ENCODE measurements at regions of chr16 and their contacts with region 1.

Region 1: DNA sequence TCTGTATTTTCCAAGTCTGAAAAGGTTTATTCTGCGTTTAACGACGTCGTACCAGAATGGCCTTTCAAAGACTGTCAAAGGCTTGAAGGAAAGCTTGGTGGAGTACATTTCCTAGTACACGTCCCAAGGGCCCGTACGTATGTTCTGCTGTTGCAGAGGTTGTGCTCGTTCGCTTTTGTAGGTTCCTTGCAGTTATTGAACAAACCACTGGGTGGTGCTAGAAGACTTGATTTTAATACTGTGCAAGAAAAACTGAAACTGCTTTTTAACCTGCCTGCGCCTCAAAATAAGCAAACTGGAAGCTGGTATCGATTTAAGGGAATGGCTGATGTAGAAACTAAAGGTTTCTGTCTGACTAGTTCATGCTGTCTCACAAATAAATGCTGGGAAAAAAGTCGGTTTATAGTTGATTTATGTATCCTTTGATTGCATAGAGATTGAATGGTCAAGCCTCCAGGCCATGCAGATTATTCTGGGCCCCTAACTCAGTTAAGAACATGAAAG is 54.6 kb downstream of the USP10 start:
- DNase-seq: peak; percentile 12 to 89 (median 59)
- ATAC-seq: peak; percentile 41 to 81 (median 74)
- H3K4me3 ChIP-seq: no peak overlapping the region
- H3K4me3 Mint-ChIP-seq: peak overlapping the region; percentile 36 to 74 (median 65)
- H3K27ac ChIP-seq: no peak overlapping the region
- H3K27ac Mint-ChIP-seq: peak overlapping the region; percentile 68 to 90
- H3K4me1 ChIP-seq: peaks cover 23 to 35% of the 10 kb centered on the region in 2 experiments
- H3K4me1 Mint-ChIP-seq: peaks cover 79 to 89% (median 86%) of the 10 kb centered on the region in 3 donors
- H3K27me3 ChIP-seq: no peaks in the 10 kb centered on the region
- H3K27me3 Mint-ChIP-seq: no peaks in the 10 kb centered on the region

Region 2: GRCh38 chr16:84687715-84688114 is 66.7 kb before region 1 on chr16:
- CTCF ChIA-PET with region 1: no interaction called
- POLR2A ChIA-PET with region 1: no interaction called
- DNase-seq: no peak
- ATAC-seq: no peak
- H3K4me3 ChIP-seq: no peak overlapping the region
- H3K4me3 Mint-ChIP-seq: no peak overlapping the region
- H3K27ac ChIP-seq: no peak overlapping the region
- H3K27ac Mint-ChIP-seq: no peak overlapping the region
- H3K4me1 ChIP-seq: no peaks in the 10 kb centered on the region
- H3K4me1 Mint-ChIP-seq: peaks cover 0 to 1% (median 0%) of the 10 kb centered on the region in 3 donors
- H3K27me3 ChIP-seq: peaks cover 0 to 9% of the 10 kb centered on the region in 2 experiments
- H3K27me3 Mint-ChIP-seq: peaks cover 10 to 15% of the 10 kb centered on the region in 2 donors

Region 3: DNA sequence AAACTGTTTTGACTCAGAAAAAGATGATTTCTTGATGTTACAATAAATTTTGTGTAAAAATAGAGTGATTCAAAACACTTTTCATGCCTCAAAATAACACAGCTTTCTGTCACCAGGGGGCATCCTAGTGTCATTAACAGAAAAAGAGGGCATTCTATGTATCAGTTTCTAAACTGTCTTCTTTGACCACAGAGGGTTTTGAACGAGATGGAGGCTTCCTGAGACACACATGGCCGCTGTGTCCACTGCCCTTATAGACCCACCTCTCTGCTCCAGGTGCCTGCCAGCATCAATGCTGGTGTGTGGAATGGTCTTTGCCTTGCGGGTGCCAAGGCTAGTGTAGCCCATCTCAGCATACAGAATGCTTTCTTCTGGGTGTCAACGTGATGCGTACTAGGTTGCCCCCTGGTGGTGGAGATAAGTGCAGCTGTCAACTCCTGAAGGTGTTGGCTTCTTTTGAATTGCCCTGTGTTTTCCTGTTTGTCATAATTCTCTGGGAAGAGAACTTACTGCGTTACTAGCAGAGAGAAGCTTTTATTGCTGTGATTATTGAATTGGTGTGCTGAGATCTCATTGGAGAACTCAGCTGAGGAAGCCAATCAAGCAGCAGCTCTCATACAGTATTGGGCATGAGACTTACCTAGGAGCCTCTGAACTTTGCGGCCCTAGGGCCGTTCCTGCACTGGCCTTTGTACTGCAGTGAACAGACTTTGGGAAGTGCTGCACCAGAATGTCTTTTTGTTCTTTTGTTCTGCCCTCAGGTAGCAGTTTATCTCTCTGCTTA is 16.0 kb before region 1 on chr16:
- CTCF ChIA-PET with region 1: interaction called, 5 to 35 read pairs
- POLR2A ChIA-PET with region 1: interaction called in 1 of 2 experiments, 10 read pairs
- DNase-seq: peak; percentile 41 to 90 (median 67)
- ATAC-seq: peak; percentile 70 to 78 (median 72)
- H3K4me3 ChIP-seq: no peak overlapping the region
- H3K4me3 Mint-ChIP-seq: peak overlapping the region in 1 of 3 donors; percentile 18
- H3K27ac ChIP-seq: no peak overlapping the region
- H3K27ac Mint-ChIP-seq: peak overlapping the region in 1 of 2 donors; percentile 69
- H3K4me1 ChIP-seq: peaks cover 6 to 31% of the 10 kb centered on the region in 2 experiments
- H3K4me1 Mint-ChIP-seq: peaks cover 43 to 57% (median 52%) of the 10 kb centered on the region in 3 donors
- H3K27me3 ChIP-seq: no peaks in the 10 kb centered on the region
- H3K27me3 Mint-ChIP-seq: no peaks in the 10 kb centered on the region

Region 4: GRCh38 chr16:84768061-84768807 is 13.8 kb after region 1 on chr16:
- CTCF ChIA-PET with region 1: interaction called, 4 to 10 read pairs
- POLR2A ChIA-PET with region 1: interaction called in 1 of 2 experiments, 3 read pairs
- DNase-seq: peak in 1 of 35 experiments; percentile 35
- ATAC-seq: peak; percentile 36 to 69 (median 48)
- H3K4me3 ChIP-seq: peak overlapping the region in 1 of 2 donors; percentile 16
- H3K4me3 Mint-ChIP-seq: peak overlapping the region; percentile 62 to 72 (median 66)
- H3K27ac ChIP-seq: no peak overlapping the region
- H3K27ac Mint-ChIP-seq: peak overlapping the region; percentile 87 to 92
- H3K4me1 ChIP-seq: peaks cover 18 to 30% of the 10 kb centered on the region in 2 experiments
- H3K4me1 Mint-ChIP-seq: peaks cover 33 to 63% (median 58%) of the 10 kb centered on the region in 3 donors
- H3K27me3 ChIP-seq: no peaks in the 10 kb centered on the region
- H3K27me3 Mint-ChIP-seq: no peaks in the 10 kb centered on the region

Region 5: GRCh38 chr16:84800158-84800978 is 46.0 kb after region 1 on chr16:
- CTCF ChIA-PET with region 1: no interaction called
- POLR2A ChIA-PET with region 1: no interaction called
- DNase-seq: no peak
- ATAC-seq: no peak
- H3K4me3 ChIP-seq: no peak overlapping the region
- H3K4me3 Mint-ChIP-seq: no peak overlapping the region
- H3K27ac ChIP-seq: no peak overlapping the region
- H3K27ac Mint-ChIP-seq: no peak overlapping the region
- H3K4me1 ChIP-seq: no peaks in the 10 kb centered on the region
- H3K4me1 Mint-ChIP-seq: no peaks in the 10 kb centered on the region
- H3K27me3 ChIP-seq: peaks cover 0 to 14% of the 10 kb centered on the region in 2 experiments
- H3K27me3 Mint-ChIP-seq: peaks cover 0 to 2% of the 10 kb centered on the region in 2 donors

Region 6: DNA sequence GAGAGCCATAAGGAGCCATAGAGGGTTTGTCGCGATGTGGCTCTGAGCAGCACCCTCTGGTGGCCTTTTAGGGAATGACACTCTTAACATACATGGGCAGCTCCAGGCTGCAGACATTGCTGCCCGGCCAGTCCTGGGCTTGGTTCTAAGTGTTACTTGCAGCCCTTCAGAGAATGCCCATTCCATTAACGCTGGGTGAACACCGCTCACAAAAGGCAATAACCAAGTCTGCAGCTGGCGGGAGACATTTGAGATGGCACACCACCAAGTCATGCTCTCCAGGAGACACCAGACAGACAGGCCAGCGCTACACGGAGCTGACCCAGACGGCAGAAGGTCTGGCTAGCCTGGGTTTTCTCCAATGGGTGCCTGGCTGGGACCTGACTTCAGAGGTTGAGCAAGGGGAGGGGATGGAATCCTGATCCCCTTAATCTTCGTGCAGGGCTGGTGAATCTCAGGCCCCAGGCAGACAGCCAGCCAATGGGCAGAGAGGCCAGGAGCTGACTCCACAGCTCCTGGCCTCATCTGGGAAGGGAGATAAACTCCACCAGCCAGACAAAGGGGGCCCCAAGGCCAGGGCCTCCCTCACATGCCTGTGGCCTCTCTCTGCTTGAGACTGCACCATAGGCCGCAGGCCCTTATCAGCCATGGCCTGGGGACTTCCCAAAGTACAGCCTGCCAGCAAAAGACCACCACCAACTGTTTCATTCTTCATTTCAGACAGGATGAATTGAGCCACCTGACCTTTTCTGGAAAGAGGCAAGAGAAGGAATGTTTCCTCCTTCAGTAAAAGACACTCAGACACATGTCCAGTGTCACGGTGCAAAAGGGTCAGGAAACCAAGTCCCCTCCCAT is 198.2 kb after region 1 on chr16:
- CTCF ChIA-PET with region 1: interaction called, 36 to 42 read pairs
- POLR2A ChIA-PET with region 1: no interaction called
- DNase-seq: peak; percentile 17 to 88 (median 56)
- ATAC-seq: peak; percentile 76 to 85 (median 82)
- H3K4me3 ChIP-seq: no peak overlapping the region
- H3K4me3 Mint-ChIP-seq: no peak overlapping the region
- H3K27ac ChIP-seq: no peak overlapping the region
- H3K27ac Mint-ChIP-seq: no peak overlapping the region
- H3K4me1 ChIP-seq: peaks cover 0 to 19% of the 10 kb centered on the region in 2 experiments
- H3K4me1 Mint-ChIP-seq: peaks cover 0 to 9% (median 7%) of the 10 kb centered on the region in 3 donors
- H3K27me3 ChIP-seq: peaks cover 0 to 42% of the 10 kb centered on the region in 2 experiments
- H3K27me3 Mint-ChIP-seq: peaks cover 3 to 4% of the 10 kb centered on the region in 2 donors

Region 7: DNA sequence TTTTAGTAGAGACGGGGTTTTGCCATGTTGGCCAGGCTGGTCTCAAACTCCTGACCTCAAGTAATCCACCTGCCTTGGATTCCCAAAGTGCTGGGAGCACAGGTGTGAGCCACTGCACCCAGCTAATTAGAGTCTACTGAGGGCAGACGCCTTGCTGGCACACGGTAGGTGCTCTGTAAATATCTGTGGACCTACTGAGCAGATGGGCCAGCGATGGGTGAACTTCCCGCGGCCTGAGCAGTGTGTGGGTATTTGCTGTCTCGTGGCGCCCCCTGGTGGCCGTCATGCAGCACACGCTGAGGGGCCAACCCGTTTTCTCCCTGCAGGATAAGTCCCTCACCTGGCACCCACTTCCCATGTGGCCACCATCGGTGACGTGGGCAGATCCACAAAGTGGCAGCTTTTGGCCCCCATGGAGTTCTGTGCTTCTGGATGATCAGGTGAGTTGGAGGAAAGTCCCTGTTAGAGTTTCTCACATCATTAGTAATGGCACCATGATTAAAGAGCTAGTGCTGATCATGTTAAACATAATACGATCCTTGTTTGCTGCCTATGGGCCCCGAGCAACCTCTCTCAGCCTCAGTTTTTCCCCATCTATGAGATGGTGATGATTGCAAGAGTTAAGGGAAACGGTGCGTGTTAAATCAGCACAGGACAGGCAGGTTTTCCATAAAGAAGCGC is 216.2 kb after region 1 on chr16:
- CTCF ChIA-PET with region 1: interaction called, 28 to 52 read pairs
- POLR2A ChIA-PET with region 1: interaction called in 1 of 2 experiments, 3 read pairs
- DNase-seq: peak; percentile 46 to 88 (median 70)
- ATAC-seq: peak; percentile 89 to 95 (median 94)
- H3K4me3 ChIP-seq: no peak overlapping the region
- H3K4me3 Mint-ChIP-seq: no peak overlapping the region
- H3K27ac ChIP-seq: no peak overlapping the region
- H3K27ac Mint-ChIP-seq: no peak overlapping the region
- H3K4me1 ChIP-seq: peaks cover 0 to 6% of the 10 kb centered on the region in 2 experiments
- H3K4me1 Mint-ChIP-seq: peaks cover 4 to 6% (median 4%) of the 10 kb centered on the region in 3 donors
- H3K27me3 ChIP-seq: peaks cover 0 to 10% of the 10 kb centered on the region in 2 experiments
- H3K27me3 Mint-ChIP-seq: no peaks in the 10 kb centered on the region

Region 8: DNA sequence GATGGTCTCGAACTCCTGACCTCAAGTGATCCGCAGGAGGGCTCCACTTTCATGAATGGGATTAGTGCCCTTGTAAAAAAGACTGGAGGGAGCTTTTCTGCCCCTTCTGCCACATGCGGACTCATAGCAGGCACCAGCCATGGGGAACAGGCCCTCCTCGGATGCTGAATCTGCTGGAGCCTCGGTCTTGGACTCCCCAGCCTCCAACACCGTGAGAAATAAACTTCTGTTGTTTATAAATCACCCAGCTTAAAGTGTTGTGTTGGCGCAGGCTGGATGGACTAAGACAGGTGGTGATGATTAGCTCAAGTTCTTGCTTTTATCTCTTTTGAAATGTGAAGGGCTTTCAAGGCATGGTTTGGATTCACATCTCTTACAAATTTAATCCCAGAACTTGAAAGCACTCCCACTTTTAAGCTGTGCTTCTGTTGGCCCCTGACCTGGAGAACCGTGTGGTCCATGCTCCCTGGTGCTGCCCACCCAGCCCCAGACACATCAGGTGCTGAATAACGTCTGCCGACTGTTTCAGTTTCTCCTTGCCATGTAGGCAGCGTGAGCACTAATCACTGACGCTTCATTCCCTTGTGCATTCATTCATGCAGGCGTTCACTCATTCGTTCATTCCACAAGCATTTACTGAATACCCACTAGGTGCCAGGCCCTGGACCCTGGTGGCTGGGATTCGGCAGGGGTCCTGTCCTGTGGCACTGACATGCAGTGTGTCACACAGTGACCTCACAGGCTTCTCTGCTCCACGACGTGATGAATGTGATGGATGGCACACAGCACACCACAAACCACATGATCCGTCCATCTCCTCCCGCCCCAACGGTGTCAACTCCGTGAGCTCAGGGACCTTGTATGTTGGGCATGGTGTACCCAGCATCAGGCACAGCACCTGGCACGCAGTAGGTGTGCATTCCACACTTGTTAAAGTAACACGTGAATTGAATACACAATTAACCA is 349.0 kb after region 1 on chr16:
- CTCF ChIA-PET with region 1: no interaction called
- POLR2A ChIA-PET with region 1: no interaction called
- DNase-seq: peak in 2 of 35 experiments; percentile 6 to 15
- ATAC-seq: no peak
- H3K4me3 ChIP-seq: no peak overlapping the region
- H3K4me3 Mint-ChIP-seq: peak overlapping the region in 2 of 3 donors; percentile 34 to 68
- H3K27ac ChIP-seq: peak overlapping the region; percentile 66
- H3K27ac Mint-ChIP-seq: peak overlapping the region; percentile 81 to 93
- H3K4me1 ChIP-seq: peaks cover 23 to 62% of the 10 kb centered on the region in 2 experiments
- H3K4me1 Mint-ChIP-seq: peaks cover 38 to 51% (median 40%) of the 10 kb centered on the region in 3 donors
- H3K27me3 ChIP-seq: peaks cover 0 to 2% of the 10 kb centered on the region in 2 experiments
- H3K27me3 Mint-ChIP-seq: no peaks in the 10 kb centered on the region

Measured in T-cell (primary cell).